CD4-positive, alpha-beta memory T cell (primary cell): ENCODE measurements at regions of chr7 and their contacts with region 1.

Region 1: GRCh38 chr7:140003913-140004382 is 58.8 kb downstream of the PARP12 start:
- DNase-seq: peak in 4 of 5 donors; percentile 22 to 41 (median 32)
- H3K4me3 ChIP-seq: no peak overlapping the region
- H3K4me3 Mint-ChIP-seq: no peak overlapping the region
- H3K27ac ChIP-seq: no peak overlapping the region
- H3K27ac Mint-ChIP-seq: peak overlapping the region in 3 of 7 donors; percentile 8 to 59 (median 38)
- H3K4me1 ChIP-seq: no peaks in the 10 kb centered on the region
- H3K4me1 Mint-ChIP-seq: peaks cover 0 to 5% (median 3%) of the 10 kb centered on the region in 4 donors
- H3K27me3 ChIP-seq: no peaks in the 10 kb centered on the region
- H3K27me3 Mint-ChIP-seq: no peaks in the 10 kb centered on the region

Region 2: GRCh38 chr7:139720705-139721231 is 283.2 kb before region 1 on chr7:
- CTCF ChIA-PET with region 1: no interaction called
- POLR2A ChIA-PET with region 1: no interaction called
- intact Hi-C with region 1: loop called (anchors 2 kb)
- DNase-seq: peak in 2 of 5 donors; percentile 15 to 22
- H3K4me3 ChIP-seq: no peak overlapping the region
- H3K4me3 Mint-ChIP-seq: no peak overlapping the region
- H3K27ac ChIP-seq: no peak overlapping the region
- H3K27ac Mint-ChIP-seq: no peak overlapping the region
- H3K4me1 ChIP-seq: peaks cover 22% of the 10 kb centered on the region
- H3K4me1 Mint-ChIP-seq: peaks cover 8 to 17% (median 11%) of the 10 kb centered on the region in 4 donors
- H3K27me3 ChIP-seq: no peaks in the 10 kb centered on the region
- H3K27me3 Mint-ChIP-seq: no peaks in the 10 kb centered on the region